ENCODE measurements at regions of chr19 and their contacts with region 1.

Region 1: DNA sequence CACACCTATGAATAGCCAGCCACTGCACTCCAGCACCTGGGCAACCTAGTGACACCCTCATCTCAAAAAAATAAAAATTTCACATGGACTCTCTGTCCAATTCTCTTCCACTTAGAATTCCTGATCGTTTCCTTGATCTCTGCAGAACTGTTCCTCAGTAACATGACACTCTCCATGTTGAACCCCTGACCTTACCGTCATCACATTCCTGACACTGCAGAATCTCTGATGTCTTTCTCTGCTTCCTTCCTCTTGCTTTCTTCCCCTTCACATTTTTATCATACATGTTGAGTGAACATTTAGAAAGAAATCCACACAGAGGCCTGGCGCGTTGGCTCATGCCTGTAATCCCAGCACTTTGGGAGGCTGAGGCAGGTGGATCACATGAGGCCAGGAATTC is 15.0 kb downstream of the ZNF114 start:
- DNase-seq: no peak
- ATAC-seq: no peak
- H3K4me3 ChIP-seq: no peak overlapping the region
- H3K27ac ChIP-seq: no peak overlapping the region
- H3K4me1 ChIP-seq: no peaks in the 10 kb centered on the region
- H3K27me3 ChIP-seq: no peaks in the 10 kb centered on the region
- CTCF ChIP-seq: no peak

Region 2: DNA sequence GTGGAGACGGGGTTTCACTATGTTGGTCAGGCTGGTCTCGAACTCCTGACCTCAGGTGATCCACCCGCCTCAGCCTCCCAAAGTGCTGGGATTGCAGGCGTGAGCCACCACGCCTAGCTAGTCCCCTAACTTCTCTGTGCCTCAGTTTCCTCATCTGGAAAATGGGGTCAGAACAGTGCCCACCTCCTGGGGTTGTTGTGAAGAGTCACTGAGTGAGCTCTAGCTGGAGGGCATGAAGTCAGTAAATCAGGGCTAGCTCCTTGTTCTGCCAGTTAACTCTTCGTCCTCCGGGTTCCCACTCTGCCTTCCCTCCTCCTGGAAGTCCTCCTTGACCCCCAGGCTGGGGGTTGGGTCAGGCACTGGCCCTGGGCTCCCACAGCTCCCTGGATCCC is 562.2 kb before region 1 on chr19:
- CTCF ChIA-PET with region 1: interaction called, 10 read pairs
- POLR2A ChIA-PET with region 1: no interaction called
- in situ Hi-C with region 1: no loop called
- intact Hi-C with region 1: no loop called
- DNase-seq: no peak
- ATAC-seq: no peak
- H3K4me3 ChIP-seq: no peak overlapping the region
- H3K27ac ChIP-seq: 0 out of 2 replicates have a peak overlapping the region, but pooled peaks have one; percentile 29
- H3K4me1 ChIP-seq: peaks cover 12% of the 10 kb centered on the region
- H3K27me3 ChIP-seq: no peaks in the 10 kb centered on the region
- CTCF ChIP-seq: no peak

Region 3: GRCh38 chr19:48152551-48152950 is 132.3 kb before region 1 on chr19:
- CTCF ChIA-PET with region 1: no interaction called
- POLR2A ChIA-PET with region 1: no interaction called
- in situ Hi-C with region 1: no loop called
- intact Hi-C with region 1: no loop called
- DNase-seq: no peak
- ATAC-seq: peak; percentile 76
- H3K4me3 ChIP-seq: no peak overlapping the region
- H3K27ac ChIP-seq: no peak overlapping the region
- H3K4me1 ChIP-seq: peaks cover 3% of the 10 kb centered on the region; the same call in 1 of the 2 replicates
- H3K27me3 ChIP-seq: no peaks in the 10 kb centered on the region
- CTCF ChIP-seq: peak; percentile 81

Region 4: GRCh38 chr19:48255376-48256303 is 29.3 kb before region 1 on chr19 and contains the start of gene CARD8:
- CTCF ChIA-PET with region 1: no interaction called
- POLR2A ChIA-PET with region 1: no interaction called
- in situ Hi-C with region 1: no loop called
- intact Hi-C with region 1: no loop called
- DNase-seq: peak; percentile 63
- ATAC-seq: peak; percentile 92
- H3K4me3 ChIP-seq: peak within 1 kb of the TSS; percentile 65 to 81
- H3K27ac ChIP-seq: peak within 1 kb of the TSS; percentile 96
- H3K4me1 ChIP-seq: peaks cover 6% of the 10 kb centered on the region; the same call in 1 of the 2 replicates
- H3K27me3 ChIP-seq: no peaks in the 10 kb centered on the region
- CTCF ChIP-seq: no peak
- total RNA-seq, gene CARD8: 19.9 TPM

Region 5: DNA sequence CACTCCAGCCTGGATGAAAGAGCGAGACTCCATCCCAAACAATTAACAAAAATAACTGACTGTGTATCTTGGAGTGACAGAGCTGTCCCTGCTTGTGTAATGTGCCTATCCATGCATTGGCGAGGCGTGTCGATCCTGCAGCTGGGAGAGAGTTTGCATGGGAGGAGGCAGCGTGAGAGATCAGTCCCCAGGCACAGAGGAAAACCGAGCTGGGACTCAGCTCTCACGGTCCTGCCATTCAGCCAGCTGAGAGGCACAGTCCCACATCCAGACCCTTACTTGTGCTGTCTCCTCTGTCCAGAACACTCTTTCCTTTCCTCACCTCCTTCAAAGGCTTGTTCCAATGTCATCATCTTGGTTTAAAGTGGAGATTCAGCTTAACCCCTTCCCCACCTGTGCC is 255.2 kb after region 1 on chr19:
- CTCF ChIA-PET with region 1: no interaction called
- POLR2A ChIA-PET with region 1: no interaction called
- in situ Hi-C with region 1: no loop called
- intact Hi-C with region 1: no loop called
- DNase-seq: no peak
- ATAC-seq: peak; percentile 65
- H3K4me3 ChIP-seq: no peak overlapping the region
- H3K27ac ChIP-seq: no peak overlapping the region
- H3K4me1 ChIP-seq: peaks cover 3% of the 10 kb centered on the region
- H3K27me3 ChIP-seq: no peaks in the 10 kb centered on the region
- CTCF ChIP-seq: no peak